ENCODE measurements at regions of chr2 and their contacts with region 1.

Region 1: DNA sequence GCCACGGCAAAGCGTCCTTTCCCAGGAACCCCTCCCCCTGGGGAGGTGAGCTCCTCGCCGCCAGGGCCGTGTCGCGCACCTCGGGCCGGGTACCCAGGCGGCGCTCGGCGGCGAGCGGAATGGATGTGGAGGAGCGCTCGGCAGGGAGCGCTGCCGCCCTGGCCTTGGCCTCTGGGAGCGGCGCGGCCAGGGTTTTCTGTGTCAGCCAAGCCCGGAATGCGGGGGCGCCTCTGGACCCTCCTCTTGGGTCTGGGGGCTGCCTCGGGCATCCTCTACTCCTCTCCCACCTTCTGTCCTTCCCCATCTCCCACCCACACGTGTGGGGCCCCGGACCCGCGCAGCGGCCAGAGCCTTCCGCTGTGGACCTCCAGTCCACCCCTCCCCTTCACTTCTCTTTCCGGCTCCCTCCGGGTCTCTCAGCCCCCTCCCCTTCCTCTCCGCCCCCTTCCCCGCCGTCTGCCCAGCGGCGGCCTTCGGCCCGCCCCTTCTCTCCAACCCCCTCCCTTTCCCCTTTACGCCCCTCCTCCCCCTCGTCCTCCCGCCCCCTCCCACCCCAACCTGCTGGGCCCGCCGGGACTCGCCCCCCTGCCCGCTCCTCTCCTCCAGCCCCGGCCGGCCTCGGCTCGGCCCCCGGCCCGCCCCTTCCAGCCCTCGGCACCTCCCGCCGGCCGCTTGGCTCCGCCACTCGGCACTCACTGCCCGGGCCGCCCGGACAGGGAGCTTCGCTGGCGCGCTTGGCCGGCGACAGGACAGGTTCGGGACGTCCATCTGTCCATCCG is at the start of gene MERTK:
- DNase-seq: peak; percentile 77
- H3K4me3 Mint-ChIP-seq: peak within 1 kb of the TSS; percentile 73
- H3K27ac Mint-ChIP-seq: no peak within 1 kb of the TSS
- H3K4me1 Mint-ChIP-seq: peaks cover 6% of the 10 kb centered on the region
- H3K27me3 Mint-ChIP-seq: peaks cover 23% of the 10 kb centered on the region
- total RNA-seq, gene MERTK: 1.0 to 1.2 TPM

Region 2: GRCh38 chr2:111883661-111884591 is 14.2 kb before region 1 on chr2 and contains the start of gene ANAPC1:
- CTCF ChIA-PET with region 1: interaction called, 11 read pairs
- POLR2A ChIA-PET with region 1: no interaction called
- intact Hi-C with region 1: no loop called
- DNase-seq: peak; percentile 90
- H3K4me3 Mint-ChIP-seq: peak within 1 kb of the TSS; percentile 97
- H3K27ac Mint-ChIP-seq: peak within 1 kb of the TSS; percentile 94
- H3K4me1 Mint-ChIP-seq: peaks cover 15% of the 10 kb centered on the region
- H3K27me3 Mint-ChIP-seq: no peaks in the 10 kb centered on the region
- total RNA-seq, gene ANAPC1: 88.8 to 90.2 TPM

Region 3: DNA sequence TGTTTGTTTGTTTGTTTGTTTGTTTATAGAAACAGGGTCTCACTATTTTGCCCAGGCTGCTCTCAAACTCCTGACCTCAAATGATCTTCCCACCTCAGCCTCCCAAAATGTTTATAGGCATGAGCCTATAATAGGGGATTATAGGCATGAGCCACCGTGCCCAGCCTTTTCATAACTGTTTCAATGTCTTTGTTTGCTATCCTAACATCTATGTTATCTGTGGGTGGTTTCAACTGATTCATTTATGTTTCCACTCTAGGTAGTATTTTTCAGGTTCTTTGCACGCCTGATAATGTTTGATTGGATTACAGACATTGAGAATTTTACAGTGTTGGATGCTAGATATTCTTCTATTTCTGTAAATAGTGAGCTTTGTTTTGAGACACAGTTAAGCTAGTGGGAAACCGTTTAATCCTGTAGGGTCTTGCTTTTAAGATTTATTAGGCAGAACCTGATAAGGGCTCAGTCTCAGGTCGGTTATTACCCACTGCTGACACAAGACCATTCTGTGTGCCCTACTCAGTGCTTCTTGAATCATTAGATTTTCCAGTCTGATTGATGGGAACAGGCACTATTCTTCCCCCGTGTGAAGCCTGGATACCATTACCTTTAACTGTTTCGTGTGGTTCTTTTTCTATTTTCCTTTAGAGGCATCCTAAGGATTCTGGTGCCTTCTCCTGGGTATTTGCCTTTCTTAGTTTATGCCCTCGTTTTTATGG is 80.5 kb after region 1 on chr2:
- CTCF ChIA-PET with region 1: no interaction called
- POLR2A ChIA-PET with region 1: no interaction called
- intact Hi-C with region 1: no loop called
- DNase-seq: no peak
- H3K4me3 Mint-ChIP-seq: no peak overlapping the region
- H3K27ac Mint-ChIP-seq: no peak overlapping the region
- H3K4me1 Mint-ChIP-seq: peaks cover 25% of the 10 kb centered on the region
- H3K27me3 Mint-ChIP-seq: peaks cover 4% of the 10 kb centered on the region